Activated CD4-positive, alpha-beta T cell treated with anti-CD3 and anti-CD28 coated beads for 36 hours (primary cell): ENCODE measurements at regions of chr1 and their contacts with region 1.

Region 1: GRCh38 chr1:101357444-101357986 is 120.7 kb downstream of the S1PR1 start:
- DNase-seq: peak; percentile 76
- ATAC-seq: peak; percentile 100
- H3K4me3 Mint-ChIP-seq: no peak overlapping the region
- H3K27ac Mint-ChIP-seq: no peak overlapping the region
- H3K4me1 Mint-ChIP-seq: peaks cover 8% of the 10 kb centered on the region
- H3K27me3 Mint-ChIP-seq: no peaks in the 10 kb centered on the region

Region 2: GRCh38 chr1:100921109-100921706 is 436.3 kb before region 1 on chr1:
- CTCF ChIA-PET with region 1: interaction called, 9 read pairs
- POLR2A ChIA-PET with region 1: no interaction called
- intact Hi-C with region 1: loop called (anchors 1 kb)
- DNase-seq: no peak
- ATAC-seq: no peak
- H3K4me3 Mint-ChIP-seq: no peak overlapping the region
- H3K27ac Mint-ChIP-seq: peak overlapping the region; percentile 70
- H3K4me1 Mint-ChIP-seq: peaks cover 43% of the 10 kb centered on the region
- H3K27me3 Mint-ChIP-seq: no peaks in the 10 kb centered on the region

Region 3: GRCh38 chr1:101309334-101310311 is 47.9 kb before region 1 on chr1:
- CTCF ChIA-PET with region 1: interaction called, 58 read pairs
- POLR2A ChIA-PET with region 1: no interaction called
- intact Hi-C with region 1: loop called (anchors 1 kb)
- DNase-seq: peak; percentile 83
- ATAC-seq: peak; percentile 57
- H3K4me3 Mint-ChIP-seq: peak overlapping the region; percentile 63
- H3K27ac Mint-ChIP-seq: peak overlapping the region; percentile 80
- H3K4me1 Mint-ChIP-seq: peaks cover 71% of the 10 kb centered on the region
- H3K27me3 Mint-ChIP-seq: no peaks in the 10 kb centered on the region

Region 4: DNA sequence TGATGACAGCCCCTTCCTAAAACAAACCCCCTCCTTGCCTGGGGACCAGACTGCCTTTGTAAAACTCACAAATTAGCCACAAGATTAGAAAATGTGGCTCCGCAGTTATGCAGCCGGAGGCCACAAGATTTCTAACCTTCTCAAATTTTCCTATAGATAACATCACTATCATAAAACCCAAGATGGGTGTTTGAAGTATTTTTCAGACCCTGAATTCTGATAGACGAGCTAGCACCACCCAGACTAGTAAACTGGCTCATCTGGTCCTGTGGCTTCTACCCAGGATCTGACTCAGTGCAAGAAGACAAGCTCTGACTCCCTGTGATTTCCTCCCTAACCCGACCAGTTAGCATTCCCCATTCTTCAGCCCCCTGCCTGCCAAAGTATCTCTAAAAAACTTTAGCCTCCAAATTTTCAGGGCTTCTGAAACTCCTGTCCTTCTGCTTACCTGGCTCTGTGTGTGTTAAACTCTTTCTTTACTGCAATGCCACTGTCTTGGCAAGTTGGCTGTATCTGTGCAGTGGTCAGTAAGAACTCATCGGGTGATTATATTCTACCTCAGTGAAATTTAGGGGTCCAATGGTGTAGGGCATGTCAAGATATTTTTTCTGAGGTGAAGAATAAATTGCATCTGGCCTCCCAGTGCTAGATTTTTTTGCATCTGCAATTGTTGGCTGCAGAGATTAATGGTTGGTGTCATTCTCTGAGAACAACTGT is 18.6 kb before region 1 on chr1:
- CTCF ChIA-PET with region 1: interaction called, 15 read pairs
- POLR2A ChIA-PET with region 1: no interaction called
- intact Hi-C with region 1: no loop called
- DNase-seq: no peak
- ATAC-seq: peak; percentile 74
- H3K4me3 Mint-ChIP-seq: no peak overlapping the region
- H3K27ac Mint-ChIP-seq: no peak overlapping the region
- H3K4me1 Mint-ChIP-seq: peaks cover 2% of the 10 kb centered on the region
- H3K27me3 Mint-ChIP-seq: no peaks in the 10 kb centered on the region

Region 5: GRCh38 chr1:101371259-101371658 is 13.7 kb after region 1 on chr1:
- CTCF ChIA-PET with region 1: interaction called, 17 read pairs
- POLR2A ChIA-PET with region 1: no interaction called
- intact Hi-C with region 1: no loop called
- DNase-seq: no peak
- ATAC-seq: peak; percentile 95
- H3K4me3 Mint-ChIP-seq: no peak overlapping the region
- H3K27ac Mint-ChIP-seq: no peak overlapping the region
- H3K4me1 Mint-ChIP-seq: peaks cover 10% of the 10 kb centered on the region
- H3K27me3 Mint-ChIP-seq: peaks cover 6% of the 10 kb centered on the region

Region 6: DNA sequence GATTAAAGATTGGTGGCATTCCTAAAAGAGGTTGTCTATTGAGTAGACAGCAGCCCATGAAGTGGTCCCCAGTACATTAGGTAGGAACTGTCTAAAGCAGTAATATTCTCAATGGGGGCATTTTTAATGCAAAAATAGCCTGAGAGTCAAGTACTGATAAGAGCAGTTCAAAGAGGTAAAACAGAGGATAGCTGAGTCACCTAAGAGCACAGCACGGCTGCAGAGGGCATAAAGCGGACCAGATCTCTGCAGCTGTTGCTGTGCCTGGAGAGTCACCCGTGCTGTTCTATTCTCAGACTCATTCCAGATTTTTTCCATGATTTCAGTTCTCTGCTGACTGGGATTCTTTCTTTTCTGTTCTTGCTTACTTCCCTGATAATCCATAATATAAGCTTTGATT is 326.0 kb after region 1 on chr1:
- CTCF ChIA-PET with region 1: no interaction called
- POLR2A ChIA-PET with region 1: no interaction called
- intact Hi-C with region 1: no loop called
- DNase-seq: no peak
- ATAC-seq: no peak
- H3K4me3 Mint-ChIP-seq: no peak overlapping the region
- H3K27ac Mint-ChIP-seq: no peak overlapping the region
- H3K4me1 Mint-ChIP-seq: no peaks in the 10 kb centered on the region
- H3K27me3 Mint-ChIP-seq: no peaks in the 10 kb centered on the region